Activated CD8-positive, alpha-beta T cell treated with anti-CD3 and anti-CD28 coated beads, Interleukin-2, amount 10 ng/mL, durations not matched to agents 7 days and 5 days (primary cell): ENCODE measurements at regions of chr1 and their contacts with region 1.

Region 1: GRCh38 chr1:182397771-182398393 is 2.6 kb downstream of the TEDDM1 start:
- DNase-seq: no peak
- ATAC-seq: no peak
- H3K4me3 Mint-ChIP-seq: no peak overlapping the region
- H3K27ac Mint-ChIP-seq: no peak overlapping the region
- H3K4me1 Mint-ChIP-seq: peaks cover 6% of the 10 kb centered on the region
- H3K27me3 Mint-ChIP-seq: peaks cover 25% of the 10 kb centered on the region

Region 2: DNA sequence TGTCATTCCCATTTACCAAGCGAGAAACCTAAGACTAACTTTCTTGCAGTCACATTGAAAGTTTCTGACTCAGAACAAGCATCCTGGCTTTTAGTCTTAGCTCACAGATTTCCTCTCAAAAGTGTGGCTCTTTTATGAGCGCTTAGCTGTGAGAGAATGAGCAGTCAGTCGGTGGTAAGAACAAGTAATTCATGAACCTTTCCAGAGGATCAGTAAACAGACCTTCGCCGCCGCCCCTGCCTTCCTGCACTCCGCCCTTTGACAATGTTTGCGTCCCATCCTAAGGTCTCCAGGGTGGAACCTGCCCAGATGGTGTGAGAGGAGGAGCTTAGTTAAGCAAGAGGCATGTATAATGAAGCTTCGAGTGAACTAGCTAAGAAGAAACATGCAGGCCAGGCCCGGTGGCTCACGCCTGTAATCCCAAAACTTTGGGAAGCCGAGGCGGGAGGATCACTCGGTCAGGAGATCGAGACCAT is 148.6 kb before region 1 on chr1:
- CTCF ChIA-PET with region 1: interaction called, 11 read pairs
- POLR2A ChIA-PET with region 1: no interaction called
- DNase-seq: no peak
- ATAC-seq: no peak
- H3K4me3 Mint-ChIP-seq: no peak overlapping the region
- H3K27ac Mint-ChIP-seq: no peak overlapping the region
- H3K4me1 Mint-ChIP-seq: peaks cover 7% of the 10 kb centered on the region
- H3K27me3 Mint-ChIP-seq: peaks cover 2% of the 10 kb centered on the region

Region 3: DNA sequence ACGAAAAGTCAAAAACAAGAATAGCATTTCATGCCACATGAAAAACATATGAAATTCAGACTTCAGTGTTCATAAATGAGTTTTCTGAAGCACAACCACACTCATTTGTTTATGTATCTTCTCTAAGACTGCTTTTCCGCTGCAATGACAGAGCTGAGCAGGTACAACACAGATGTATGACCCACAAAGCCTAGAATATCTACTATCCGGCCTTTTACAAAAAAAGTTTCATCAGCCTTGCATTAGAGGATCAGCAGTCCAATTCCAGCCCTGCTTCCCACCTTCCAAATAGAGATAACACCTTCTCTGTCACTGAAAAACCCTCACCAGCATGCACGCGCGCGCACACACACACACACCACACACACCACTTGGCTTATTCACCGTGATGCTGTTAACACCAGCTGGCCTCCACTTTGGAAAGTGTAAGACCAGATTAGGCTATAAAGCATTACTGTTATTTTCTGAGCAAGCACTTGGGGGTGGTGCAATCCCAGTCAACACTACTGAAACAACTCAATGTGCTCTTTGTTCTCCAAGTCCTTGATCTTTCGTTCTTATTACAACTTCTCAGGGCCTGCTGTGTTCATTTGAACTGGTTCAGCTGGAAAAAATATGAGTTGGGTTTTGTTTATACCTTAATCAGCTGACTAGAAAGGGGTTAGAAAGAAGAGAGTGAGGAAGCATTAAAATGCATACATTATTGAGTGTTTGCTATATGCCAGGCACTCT is 96.2 kb before region 1 on chr1:
- CTCF ChIA-PET with region 1: interaction called, 12 read pairs
- POLR2A ChIA-PET with region 1: no interaction called
- DNase-seq: no peak
- ATAC-seq: no peak
- H3K4me3 Mint-ChIP-seq: no peak overlapping the region
- H3K27ac Mint-ChIP-seq: no peak overlapping the region
- H3K4me1 Mint-ChIP-seq: peaks cover 21% of the 10 kb centered on the region
- H3K27me3 Mint-ChIP-seq: no peaks in the 10 kb centered on the region

Region 4: GRCh38 chr1:182408435-182409075 is 10.7 kb after region 1 on chr1:
- CTCF ChIA-PET with region 1: interaction called, 18 read pairs
- POLR2A ChIA-PET with region 1: no interaction called
- DNase-seq: no peak
- ATAC-seq: no peak
- H3K4me3 Mint-ChIP-seq: no peak overlapping the region
- H3K27ac Mint-ChIP-seq: no peak overlapping the region
- H3K4me1 Mint-ChIP-seq: peaks cover 2% of the 10 kb centered on the region
- H3K27me3 Mint-ChIP-seq: peaks cover 46% of the 10 kb centered on the region

Region 5: GRCh38 chr1:182476625-182477024 is 78.7 kb after region 1 on chr1:
- CTCF ChIA-PET with region 1: no interaction called
- POLR2A ChIA-PET with region 1: no interaction called
- DNase-seq: no peak
- ATAC-seq: no peak
- H3K4me3 Mint-ChIP-seq: no peak overlapping the region
- H3K27ac Mint-ChIP-seq: no peak overlapping the region
- H3K4me1 Mint-ChIP-seq: no peaks in the 10 kb centered on the region
- H3K27me3 Mint-ChIP-seq: peaks cover 12% of the 10 kb centered on the region